ENCODE measurements at regions of chr2 and their contacts with region 1.

Region 1: GRCh38 chr2:181466661-181467576 is 9.7 kb downstream of the ITGA4 start:
- DNase-seq: peak; percentile 7 to 63 (median 34)
- ATAC-seq: peak; percentile 59; the same call in 1 of the 3 replicates
- H3K4me3 ChIP-seq: no peak overlapping the region
- H3K27ac ChIP-seq: no peak overlapping the region
- H3K4me1 ChIP-seq: no peaks in the 10 kb centered on the region
- H3K27me3 ChIP-seq: no peaks in the 10 kb centered on the region
- CTCF ChIP-seq: peak; percentile 48 to 64 (median 53)
- EP300 ChIP-seq: no peak
- POLR2A ChIP-seq: no peak
- RAD21 ChIP-seq: peak; percentile 55 to 63

Region 2: DNA sequence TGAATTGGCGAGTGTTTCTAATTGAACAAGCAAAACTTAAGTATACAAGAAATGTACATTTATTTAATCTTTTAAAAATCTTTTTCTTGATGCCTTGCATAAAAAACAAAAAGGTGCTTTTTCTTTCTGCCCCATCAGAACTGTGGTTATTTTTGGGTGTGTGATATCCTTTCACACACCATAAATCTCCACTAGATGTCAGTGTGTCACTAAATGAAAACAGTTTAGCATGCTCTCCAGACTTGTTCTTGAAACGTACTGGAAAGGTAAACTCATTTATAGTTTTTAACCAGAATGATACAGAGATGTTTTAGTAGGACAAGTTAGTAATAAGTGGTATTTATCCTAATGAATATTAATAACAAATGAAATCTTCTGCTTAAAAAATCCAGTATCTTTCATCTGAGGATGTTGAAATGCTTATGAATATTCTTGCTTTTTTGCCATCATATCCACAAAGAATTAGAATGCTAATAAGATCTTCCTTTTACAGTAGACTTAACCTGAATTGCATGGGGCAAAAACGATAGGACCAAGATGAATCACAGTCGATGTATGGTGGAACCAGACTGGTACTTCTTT is 389.7 kb before region 1 on chr2:
- CTCF ChIA-PET with region 1: interaction called, 3 read pairs
- POLR2A ChIA-PET with region 1: no interaction called
- in situ Hi-C with region 1: no loop called
- intact Hi-C with region 1: loop called (anchors 2 kb)
- DNase-seq: peak; percentile 27 to 67 (median 40)
- ATAC-seq: peak; percentile 95
- H3K4me3 ChIP-seq: no peak overlapping the region
- H3K27ac ChIP-seq: no peak overlapping the region
- H3K4me1 ChIP-seq: no peaks in the 10 kb centered on the region
- H3K27me3 ChIP-seq: no peaks in the 10 kb centered on the region
- CTCF ChIP-seq: peak; percentile 42 to 72 (median 63); a peak in 5 of 6 replicates
- EP300 ChIP-seq: no peak
- POLR2A ChIP-seq: no peak
- RAD21 ChIP-seq: peak; percentile 61 to 75

Region 3: GRCh38 chr2:181104512-181105115 is 362.3 kb before region 1 on chr2:
- CTCF ChIA-PET with region 1: no interaction called
- POLR2A ChIA-PET with region 1: no interaction called
- in situ Hi-C with region 1: no loop called
- intact Hi-C with region 1: loop called (anchors 10 kb)
- DNase-seq: peak in 2 of 4 experiments; percentile 12 to 25
- ATAC-seq: peak; percentile 47; the same call in 2 of the 3 replicates
- H3K4me3 ChIP-seq: no peak overlapping the region
- H3K27ac ChIP-seq: no peak overlapping the region
- H3K4me1 ChIP-seq: no peaks in the 10 kb centered on the region
- H3K27me3 ChIP-seq: no peaks in the 10 kb centered on the region
- CTCF ChIP-seq: peak; percentile 24 to 51 (median 33); a peak in 4 of 6 replicates
- EP300 ChIP-seq: no peak
- POLR2A ChIP-seq: no peak
- RAD21 ChIP-seq: peak; percentile 61 to 78

Measured in K562 (cell line).